K562 (cell line): ENCODE measurements at regions of chr20 and their contacts with region 1.

Region 1: DNA sequence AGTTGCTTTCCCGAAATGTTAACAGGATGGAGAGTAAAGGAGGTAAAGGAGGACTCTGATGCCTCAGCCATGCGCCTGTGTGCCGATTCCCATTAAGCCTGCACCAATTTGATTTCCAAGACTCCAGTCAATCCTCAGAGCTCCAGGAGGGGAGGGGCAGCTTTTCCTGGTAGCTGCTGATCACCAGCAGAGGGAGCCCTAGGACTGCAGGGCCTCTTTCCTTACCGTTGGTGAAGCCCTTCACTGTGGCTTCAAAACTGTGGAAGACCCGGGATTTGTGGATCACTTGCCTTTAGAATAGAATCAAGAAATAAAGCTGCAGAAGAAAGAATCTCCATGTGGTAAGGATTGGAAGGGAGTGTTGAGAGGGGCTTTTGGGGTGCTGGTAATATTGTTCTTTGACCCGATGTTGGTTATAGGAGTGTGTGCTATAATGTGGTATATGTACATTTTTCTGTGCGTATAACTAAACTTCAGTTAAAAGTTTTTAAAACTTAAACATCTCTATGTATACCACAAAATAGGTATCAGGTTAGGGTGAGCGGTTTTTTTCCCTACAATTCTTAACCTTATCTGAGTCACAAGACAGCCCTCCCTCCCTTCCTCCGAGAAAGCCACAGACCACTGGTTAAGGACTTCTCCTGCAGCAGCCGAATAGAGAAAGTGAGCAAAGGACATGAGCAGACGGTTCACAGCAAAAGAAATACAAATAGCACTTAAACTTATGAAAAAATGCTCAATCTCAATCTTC is 6.9 kb upstream of the OSER1 start:
- DNase-seq: peak; percentile 64 to 85 (median 66)
- ATAC-seq: peak; percentile 91
- H3K4me3 ChIP-seq: no peak overlapping the region
- H3K27ac ChIP-seq: no peak overlapping the region
- H3K4me1 ChIP-seq: peaks cover 4 to 11% of the 10 kb centered on the region in 2 experiments; a peak in 4 of 5 replicates
- H3K27me3 ChIP-seq: peaks cover 0 to 9% of the 10 kb centered on the region in 2 experiments; a peak in 2 of 5 replicates
- CTCF ChIP-seq: peak; percentile 91 to 98 (median 96)
- EP300 ChIP-seq: no peak
- POLR2A ChIP-seq: no peak
- RAD21 ChIP-seq: peak; percentile 94 to 96

Region 2: DNA sequence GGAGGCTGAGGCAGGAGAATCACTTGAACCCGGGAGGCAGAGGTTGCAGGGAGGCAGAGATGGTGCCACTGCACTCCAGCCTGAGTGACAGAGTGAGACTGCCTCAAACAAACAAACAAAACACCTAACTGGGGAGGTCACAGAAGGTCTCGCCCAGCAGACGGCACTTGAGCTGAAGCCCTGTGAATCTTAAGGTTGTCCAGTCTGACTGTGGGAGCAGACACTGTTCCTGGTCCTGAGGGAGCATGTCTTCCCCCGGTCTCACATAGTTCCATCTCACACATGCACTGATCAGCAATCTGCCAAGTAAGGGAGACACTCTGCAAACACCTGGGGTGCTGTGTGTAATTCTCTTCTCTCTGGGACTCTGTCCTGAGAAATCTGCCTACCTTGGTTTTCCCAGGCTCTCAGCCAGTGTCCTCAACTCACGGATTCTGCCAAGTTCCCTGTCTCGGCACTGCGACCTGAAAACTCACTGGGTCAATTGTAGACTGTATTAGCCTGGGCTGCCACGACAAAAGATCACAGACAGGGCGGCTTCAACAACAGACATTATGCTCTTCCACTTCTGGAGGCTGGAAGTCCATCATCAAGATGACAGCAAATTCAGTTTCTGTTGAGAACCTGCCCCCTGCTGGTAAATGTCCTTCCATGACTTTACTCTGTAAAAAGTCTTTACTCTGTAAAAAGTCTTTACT is 124.8 kb before region 1 on chr20:
- CTCF ChIA-PET with region 1: no interaction called
- POLR2A ChIA-PET with region 1: no interaction called
- in situ Hi-C with region 1: no loop called
- intact Hi-C with region 1: no loop called
- DNase-seq: peak in 1 of 4 experiments; percentile 57
- ATAC-seq: peak; percentile 75
- H3K4me3 ChIP-seq: no peak overlapping the region
- H3K27ac ChIP-seq: no peak overlapping the region
- H3K4me1 ChIP-seq: peaks cover 6 to 7% of the 10 kb centered on the region in 2 experiments; a peak in 4 of 5 replicates
- H3K27me3 ChIP-seq: peaks cover 4 to 13% of the 10 kb centered on the region in 2 experiments
- CTCF ChIP-seq: peak; percentile 33 to 71 (median 61); a peak in 4 of 6 replicates
- EP300 ChIP-seq: no peak
- POLR2A ChIP-seq: no peak
- RAD21 ChIP-seq: peak; percentile 40 to 71

Region 3: DNA sequence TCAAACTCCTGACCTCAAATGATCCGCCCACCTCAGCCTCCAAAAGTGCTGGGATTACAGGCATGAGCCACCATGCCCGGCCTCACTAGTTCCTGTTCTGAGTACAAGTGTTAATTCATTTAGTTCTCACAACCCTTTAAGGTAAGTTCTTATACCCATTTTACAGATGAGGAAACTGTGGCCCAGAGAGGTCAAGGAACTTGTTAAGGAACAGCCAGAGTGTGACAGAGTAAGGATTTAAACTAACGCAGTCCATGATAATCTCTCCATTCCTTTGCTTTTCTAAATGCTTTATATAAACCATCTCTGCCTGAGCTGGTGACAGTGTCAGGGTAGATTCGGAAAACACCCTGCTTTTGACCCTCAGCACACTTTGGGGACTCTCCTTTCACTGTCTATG is 80.2 kb after region 1 on chr20:
- CTCF ChIA-PET with region 1: no interaction called
- POLR2A ChIA-PET with region 1: no interaction called
- in situ Hi-C with region 1: no loop called
- intact Hi-C with region 1: no loop called
- DNase-seq: no peak
- ATAC-seq: no peak
- H3K4me3 ChIP-seq: no peak overlapping the region
- H3K27ac ChIP-seq: no peak overlapping the region
- H3K4me1 ChIP-seq: no peaks in the 10 kb centered on the region
- H3K27me3 ChIP-seq: peaks cover 5 to 28% of the 10 kb centered on the region in 2 experiments; a peak in 3 of 5 replicates
- CTCF ChIP-seq: no peak
- EP300 ChIP-seq: no peak
- POLR2A ChIP-seq: no peak
- RAD21 ChIP-seq: no peak

Region 4: DNA sequence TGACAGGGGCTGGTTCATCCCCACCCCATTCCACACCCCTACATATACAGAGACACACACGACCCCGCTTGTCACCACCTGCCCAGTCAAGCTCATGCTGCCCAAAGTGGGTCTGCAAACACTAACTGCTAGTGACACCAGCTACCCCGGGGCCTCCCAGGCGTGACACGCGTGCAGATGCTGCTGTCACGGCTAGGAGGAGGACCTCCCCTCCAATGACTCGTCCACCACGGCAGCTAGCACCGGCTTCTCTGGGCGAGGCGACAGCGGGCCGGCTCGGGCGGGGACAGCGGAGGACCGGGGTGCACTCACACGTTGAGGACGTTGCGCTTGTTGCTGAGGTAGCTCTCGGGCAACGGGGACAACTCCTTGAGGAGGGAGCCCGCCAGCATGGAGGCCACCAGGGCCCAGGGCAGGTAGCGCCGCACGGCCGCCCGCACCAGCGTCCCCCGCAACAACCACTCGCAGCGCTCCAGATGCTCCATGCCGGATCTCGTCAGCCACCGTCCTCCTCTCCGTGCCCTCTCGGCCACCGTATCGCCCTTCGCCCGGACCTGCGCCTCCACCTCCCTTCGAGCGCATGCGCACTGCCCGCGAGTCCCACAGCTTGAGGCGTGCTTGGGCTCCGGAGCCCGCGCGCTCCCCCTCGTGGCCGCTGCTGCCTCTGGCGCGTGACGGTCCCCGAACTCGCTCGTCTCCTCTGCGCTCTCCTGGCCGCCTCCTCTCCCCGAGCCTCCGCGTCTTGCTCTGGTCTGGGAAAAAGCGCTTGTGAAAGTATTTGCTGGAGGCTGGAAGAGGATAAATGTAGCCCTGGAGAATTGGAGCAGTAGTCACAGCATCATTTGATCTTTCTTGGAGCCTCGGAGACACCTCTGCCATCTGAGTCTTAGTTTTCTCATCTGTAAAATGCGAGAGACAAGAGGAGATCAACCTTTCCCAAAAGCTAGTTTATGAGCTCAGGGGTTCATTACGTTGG is 93.4 kb after region 1 on chr20 and contains the start of gene FITM2:
- CTCF ChIA-PET with region 1: interaction called, 8 read pairs
- POLR2A ChIA-PET with region 1: no interaction called
- in situ Hi-C with region 1: loop called (anchors 5 kb)
- intact Hi-C with region 1: loop called (anchors 1 kb)
- DNase-seq: peak; percentile 97 to 99 (median 98)
- ATAC-seq: peak; percentile 96
- H3K4me3 ChIP-seq: peak within 1 kb of the TSS; percentile 63
- H3K27ac ChIP-seq: peak within 1 kb of the TSS; percentile 20; the same call in 1 of the 3 replicates
- H3K4me1 ChIP-seq: peaks cover 12 to 15% of the 10 kb centered on the region in 2 experiments
- H3K27me3 ChIP-seq: no peaks in the 10 kb centered on the region
- CTCF ChIP-seq: peak; percentile 92 to 96 (median 95)
- EP300 ChIP-seq: no peak
- POLR2A ChIP-seq: peak; percentile 53; the same call in 1 of the 2 replicates
- RAD21 ChIP-seq: peak; percentile 89
- polyA plus RNA-seq, gene FITM2: 0.64 to 0.87 TPM

Region 5: GRCh38 chr20:44460795-44461141 is 243.3 kb after region 1 on chr20:
- CTCF ChIA-PET with region 1: interaction called, 10 read pairs
- POLR2A ChIA-PET with region 1: no interaction called
- in situ Hi-C with region 1: loop called (anchors 10 kb)
- intact Hi-C with region 1: loop called (anchors 2 kb)
- DNase-seq: peak; percentile 28 to 50 (median 36)
- ATAC-seq: peak; percentile 69
- H3K4me3 ChIP-seq: no peak overlapping the region
- H3K27ac ChIP-seq: no peak overlapping the region
- H3K4me1 ChIP-seq: peaks cover 0 to 4% of the 10 kb centered on the region in 2 experiments; a peak in 2 of 5 replicates
- H3K27me3 ChIP-seq: peaks cover 7 to 23% of the 10 kb centered on the region in 2 experiments; a peak in 2 of 5 replicates
- CTCF ChIP-seq: peak; percentile 52 to 83 (median 55); a peak in 5 of 6 replicates
- EP300 ChIP-seq: no peak
- POLR2A ChIP-seq: no peak
- RAD21 ChIP-seq: peak; percentile 83 to 92

Region 6: DNA sequence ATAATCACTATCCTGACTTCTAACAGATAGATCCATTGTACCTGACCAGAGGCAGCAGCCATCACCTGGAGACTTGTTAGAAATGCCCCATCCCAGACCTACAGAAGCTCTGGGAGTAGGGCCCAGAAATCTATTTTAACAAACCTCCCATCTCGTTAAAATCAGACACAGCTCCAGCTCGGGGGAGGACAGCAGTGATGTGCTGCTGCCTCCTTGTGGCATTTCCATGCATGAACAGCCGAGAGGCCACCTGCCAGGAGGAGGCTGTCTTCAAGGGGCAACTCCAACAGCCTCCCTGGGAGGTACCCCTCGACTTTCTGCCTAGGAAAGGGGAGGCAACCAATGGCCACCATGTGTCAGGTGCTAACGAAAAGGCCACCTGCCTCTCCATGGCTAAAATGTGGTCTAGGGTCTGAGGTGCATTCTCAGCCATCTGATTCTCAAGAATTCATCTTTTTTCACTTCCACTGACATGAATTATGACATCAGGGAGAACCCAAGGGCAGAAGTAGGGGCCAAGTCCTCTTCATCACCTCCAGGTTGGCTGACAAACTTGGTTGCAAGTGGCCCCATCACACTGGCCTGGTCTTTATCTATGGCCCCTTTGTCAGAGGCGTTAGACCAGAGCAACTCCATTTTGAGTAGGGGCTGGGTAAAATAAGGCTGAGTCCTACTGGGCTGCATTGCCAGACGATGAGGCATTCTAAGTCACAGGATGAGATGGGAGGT is 516.0 kb after region 1 on chr20:
- CTCF ChIA-PET with region 1: interaction called, 3 read pairs
- POLR2A ChIA-PET with region 1: no interaction called
- in situ Hi-C with region 1: no loop called
- intact Hi-C with region 1: loop called (anchors 5 kb)
- DNase-seq: peak; percentile 52 to 70 (median 60)
- ATAC-seq: peak; percentile 81
- H3K4me3 ChIP-seq: no peak overlapping the region
- H3K27ac ChIP-seq: no peak overlapping the region
- H3K4me1 ChIP-seq: no peaks in the 10 kb centered on the region; a peak in 1 of 5 replicates
- H3K27me3 ChIP-seq: peaks cover 12 to 27% of the 10 kb centered on the region in 2 experiments; a peak in 4 of 5 replicates
- CTCF ChIP-seq: peak; percentile 86 to 87 (median 87)
- EP300 ChIP-seq: no peak
- POLR2A ChIP-seq: no peak
- RAD21 ChIP-seq: peak; percentile 86 to 88